CD8-positive, alpha-beta memory T cell (primary cell): ENCODE measurements at regions of chr3 and their contacts with region 1.

Region 1: GRCh38 chr3:14261229-14261628 is 82.6 kb downstream of the LSM3 start:
- DNase-seq: peak; percentile 53 to 81 (median 67)
- H3K4me3 ChIP-seq: no peak overlapping the region
- H3K4me3 Mint-ChIP-seq: no peak overlapping the region
- H3K27ac ChIP-seq: no peak overlapping the region
- H3K27ac Mint-ChIP-seq: no peak overlapping the region
- H3K4me1 ChIP-seq: no peaks in the 10 kb centered on the region
- H3K4me1 Mint-ChIP-seq: no peaks in the 10 kb centered on the region
- H3K27me3 ChIP-seq: no peaks in the 10 kb centered on the region
- H3K27me3 Mint-ChIP-seq: peaks cover 4 to 11% of the 10 kb centered on the region in 2 donors

Region 2: GRCh38 chr3:14166877-14167603 is 94.2 kb before region 1 on chr3:
- CTCF ChIA-PET with region 1: no interaction called
- POLR2A ChIA-PET with region 1: no interaction called
- DNase-seq: no peak
- H3K4me3 ChIP-seq: no peak overlapping the region
- H3K4me3 Mint-ChIP-seq: no peak overlapping the region
- H3K27ac ChIP-seq: no peak overlapping the region
- H3K27ac Mint-ChIP-seq: peak overlapping the region in 4 of 8 donors; percentile 2 to 80 (median 46)
- H3K4me1 ChIP-seq: no peaks in the 10 kb centered on the region
- H3K4me1 Mint-ChIP-seq: peaks cover 27 to 54% (median 44%) of the 10 kb centered on the region in 3 donors
- H3K27me3 ChIP-seq: no peaks in the 10 kb centered on the region
- H3K27me3 Mint-ChIP-seq: no peaks in the 10 kb centered on the region

Region 3: GRCh38 chr3:14289590-14290461 is 28.6 kb after region 1 on chr3:
- CTCF ChIA-PET with region 1: no interaction called
- POLR2A ChIA-PET with region 1: no interaction called
- DNase-seq: no peak
- H3K4me3 ChIP-seq: no peak overlapping the region
- H3K4me3 Mint-ChIP-seq: no peak overlapping the region
- H3K27ac ChIP-seq: no peak overlapping the region
- H3K27ac Mint-ChIP-seq: peak overlapping the region in 2 of 8 donors; percentile 20 to 34
- H3K4me1 ChIP-seq: no peaks in the 10 kb centered on the region
- H3K4me1 Mint-ChIP-seq: no peaks in the 10 kb centered on the region
- H3K27me3 ChIP-seq: no peaks in the 10 kb centered on the region
- H3K27me3 Mint-ChIP-seq: peaks cover 0 to 5% of the 10 kb centered on the region in 2 donors

Region 4: GRCh38 chr3:14461748-14462324 is 200.6 kb after region 1 on chr3:
- CTCF ChIA-PET with region 1: interaction called, 24 read pairs
- POLR2A ChIA-PET with region 1: interaction called, 9 read pairs
- DNase-seq: peak; percentile 10 to 68 (median 23)
- H3K4me3 ChIP-seq: no peak overlapping the region
- H3K4me3 Mint-ChIP-seq: no peak overlapping the region
- H3K27ac ChIP-seq: no peak overlapping the region
- H3K27ac Mint-ChIP-seq: peak overlapping the region in 1 of 8 donors; percentile 87
- H3K4me1 ChIP-seq: no peaks in the 10 kb centered on the region
- H3K4me1 Mint-ChIP-seq: peaks cover 0 to 5% (median 4%) of the 10 kb centered on the region in 3 donors
- H3K27me3 ChIP-seq: no peaks in the 10 kb centered on the region
- H3K27me3 Mint-ChIP-seq: no peaks in the 10 kb centered on the region

Region 5: DNA sequence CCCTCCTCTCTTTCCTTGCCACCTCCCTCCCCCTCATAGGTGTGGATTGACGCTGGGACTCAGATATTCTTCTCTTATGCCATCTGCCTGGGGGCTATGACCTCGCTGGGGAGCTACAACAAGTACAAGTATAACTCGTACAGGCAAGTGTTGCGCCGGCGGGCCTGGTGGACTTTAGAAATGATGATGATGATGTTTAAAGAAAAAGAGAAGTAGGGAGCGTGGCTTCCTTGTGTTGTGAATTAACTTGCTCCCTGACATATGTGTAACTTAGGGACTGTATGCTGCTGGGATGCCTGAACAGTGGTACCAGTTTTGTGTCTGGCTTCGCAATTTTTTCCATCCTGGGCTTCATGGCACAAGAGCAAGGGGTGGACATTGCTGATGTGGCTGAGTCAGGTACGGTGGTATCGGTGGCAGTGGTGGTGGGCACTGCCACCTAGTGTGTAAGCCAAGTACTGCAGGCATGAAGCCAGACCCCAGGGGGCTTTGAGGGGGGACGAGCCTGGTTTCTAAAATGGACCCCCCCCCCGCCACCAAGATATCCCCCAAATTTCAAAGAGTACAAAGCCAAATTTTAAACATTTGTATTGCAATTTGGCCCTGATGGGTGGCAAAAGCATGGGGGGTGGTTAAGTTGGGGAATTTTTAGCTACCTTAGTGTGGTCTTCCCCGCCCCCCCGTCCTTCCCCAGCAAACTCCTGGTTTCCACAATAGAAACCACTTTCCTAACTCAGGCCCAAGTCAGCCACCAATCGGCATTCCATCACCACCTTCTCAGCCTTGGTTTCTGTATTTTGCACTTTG is 206.8 kb after region 1 on chr3:
- CTCF ChIA-PET with region 1: interaction called, 24 read pairs
- POLR2A ChIA-PET with region 1: no interaction called
- DNase-seq: peak; percentile 18 to 65 (median 38)
- H3K4me3 ChIP-seq: no peak overlapping the region
- H3K4me3 Mint-ChIP-seq: no peak overlapping the region
- H3K27ac ChIP-seq: no peak overlapping the region
- H3K27ac Mint-ChIP-seq: peak overlapping the region in 3 of 8 donors; percentile 40 to 83 (median 66)
- H3K4me1 ChIP-seq: no peaks in the 10 kb centered on the region
- H3K4me1 Mint-ChIP-seq: peaks cover 0 to 3% (median 0%) of the 10 kb centered on the region in 3 donors
- H3K27me3 ChIP-seq: no peaks in the 10 kb centered on the region
- H3K27me3 Mint-ChIP-seq: no peaks in the 10 kb centered on the region

Region 6: DNA sequence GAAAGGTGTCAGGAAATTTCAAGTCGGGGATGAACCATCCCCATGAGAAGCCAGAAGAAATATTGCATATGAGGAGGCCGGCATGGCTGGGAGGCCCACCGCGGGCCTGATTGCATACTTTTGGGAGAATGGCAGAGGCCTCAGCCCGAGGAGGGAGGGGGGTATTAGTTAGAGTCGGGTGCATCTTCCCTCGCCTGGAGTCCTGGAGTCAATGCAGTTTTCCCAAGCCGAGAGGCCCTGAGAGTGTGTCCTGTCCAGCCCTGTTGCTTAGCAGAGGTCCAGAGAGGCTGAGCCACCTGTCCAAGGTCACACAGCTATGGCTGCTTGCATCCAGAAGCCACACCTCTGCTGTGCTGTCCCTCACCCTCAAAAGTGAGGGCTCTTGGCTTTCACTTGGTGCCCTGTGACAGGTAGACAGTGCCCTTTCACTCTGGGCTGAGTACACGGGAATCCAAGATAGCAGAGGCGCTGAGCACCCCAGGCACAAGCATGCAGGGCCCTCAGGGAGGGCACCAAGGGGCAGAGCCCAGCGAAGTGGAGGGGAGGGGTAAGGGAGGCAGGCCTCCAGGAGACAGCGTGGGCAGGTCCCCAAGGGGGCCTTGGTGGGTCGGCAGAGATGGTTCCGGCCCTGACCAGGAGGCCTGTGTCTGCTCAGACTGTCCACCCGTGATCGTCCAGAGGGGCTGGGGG is 230.4 kb after region 1 on chr3:
- CTCF ChIA-PET with region 1: no interaction called
- POLR2A ChIA-PET with region 1: no interaction called
- DNase-seq: no peak
- H3K4me3 ChIP-seq: no peak overlapping the region
- H3K4me3 Mint-ChIP-seq: no peak overlapping the region
- H3K27ac ChIP-seq: no peak overlapping the region
- H3K27ac Mint-ChIP-seq: peak overlapping the region in 1 of 8 donors; percentile 73
- H3K4me1 ChIP-seq: no peaks in the 10 kb centered on the region
- H3K4me1 Mint-ChIP-seq: no peaks in the 10 kb centered on the region
- H3K27me3 ChIP-seq: no peaks in the 10 kb centered on the region
- H3K27me3 Mint-ChIP-seq: peaks cover 0 to 5% of the 10 kb centered on the region in 2 donors